Psoas muscle (tissue), 8 donors: ENCODE measurements at regions of chr9 and their contacts with region 1.

Region 1: DNA sequence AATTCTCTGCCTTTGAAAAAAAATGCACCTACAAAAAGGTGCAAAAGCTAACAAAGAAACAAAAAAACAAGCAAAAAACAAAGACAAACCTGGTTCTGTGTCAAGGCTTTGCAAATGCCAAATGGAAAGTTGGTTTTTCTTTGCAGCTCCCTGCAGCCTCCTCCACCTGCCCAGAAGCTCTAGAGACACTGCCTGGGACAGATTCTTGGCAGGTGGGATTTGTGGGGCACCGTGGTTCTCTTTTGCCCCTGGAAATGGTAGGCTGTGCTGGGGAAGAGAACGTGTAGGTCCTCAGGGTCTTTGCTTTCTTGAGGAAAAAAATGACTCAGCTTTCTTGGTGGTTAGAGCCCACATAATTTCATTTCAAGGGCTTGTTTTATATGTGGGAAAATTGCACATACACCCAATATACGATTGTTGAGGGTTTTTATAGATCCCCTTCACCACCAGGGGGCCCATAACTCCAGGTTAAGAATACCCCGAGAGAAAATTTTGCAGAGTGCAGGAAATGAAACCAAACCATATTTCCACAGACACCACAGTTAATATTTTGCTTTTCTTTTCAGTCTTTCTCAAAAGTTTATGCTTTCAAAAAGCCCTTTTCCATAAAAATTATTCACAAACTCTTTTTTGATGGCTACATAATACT is 58.7 kb downstream of the NXNL2 start:
- DNase-seq: no peak
- ATAC-seq: no peak
- H3K4me3 ChIP-seq: no peak overlapping the region
- H3K27ac ChIP-seq: no peak overlapping the region
- H3K4me1 ChIP-seq: no peaks in the 10 kb centered on the region
- H3K27me3 ChIP-seq: peaks cover 0 to 2% (median 0%) of the 10 kb centered on the region in 3 donors
- CTCF ChIP-seq: peak; percentile 57

Region 2: DNA sequence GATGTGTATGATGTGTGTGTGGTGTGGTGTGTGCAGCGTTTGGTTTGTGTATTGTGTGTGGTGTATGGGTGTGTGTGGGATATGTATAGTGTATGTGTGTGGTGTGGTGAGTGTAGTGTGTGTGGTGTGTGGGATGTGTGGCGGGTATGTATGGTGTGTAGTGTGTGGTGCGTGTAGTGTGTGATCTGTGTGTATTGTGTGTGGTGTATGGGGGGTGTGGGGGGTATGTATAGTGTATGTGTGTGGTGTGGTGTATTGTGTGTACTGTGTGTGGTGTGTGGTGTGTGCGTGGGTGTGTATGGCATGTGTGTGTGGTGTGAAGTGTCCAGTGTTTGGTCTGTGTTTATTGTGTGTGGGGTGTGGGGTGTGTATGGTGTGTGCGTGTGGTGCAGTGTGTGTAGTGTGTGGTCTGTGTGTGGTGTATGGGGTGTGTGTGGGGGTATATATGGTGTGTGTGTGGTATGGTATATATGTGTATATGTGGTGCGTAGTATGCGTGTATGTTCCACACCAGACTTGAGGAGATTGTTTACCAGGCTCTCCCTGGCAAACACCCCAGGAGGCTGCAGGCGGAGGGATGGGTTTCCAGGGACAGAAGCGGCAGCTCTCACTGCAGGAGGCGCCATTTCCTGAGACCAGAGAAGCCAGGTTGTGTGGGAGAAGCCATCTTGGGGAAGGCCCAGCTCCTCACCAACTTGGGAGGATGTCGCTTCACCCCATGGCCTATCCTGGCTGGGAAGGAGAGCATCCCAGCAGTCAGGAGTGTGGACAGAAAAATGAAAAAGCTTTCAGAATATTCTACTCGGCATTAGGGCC is 79.4 kb after region 1 on chr9:
- intact Hi-C with region 1: no loop called
- DNase-seq: no peak
- ATAC-seq: no peak
- H3K4me3 ChIP-seq: no peak overlapping the region
- H3K27ac ChIP-seq: no peak overlapping the region
- H3K4me1 ChIP-seq: no peaks in the 10 kb centered on the region
- H3K27me3 ChIP-seq: no peaks in the 10 kb centered on the region
- CTCF ChIP-seq: no peak

Region 3: GRCh38 chr9:89000973-89001916 is 407.6 kb after region 1 on chr9:
- intact Hi-C with region 1: loop called (anchors 2 to 5 kb)
- DNase-seq: peak; percentile 86 to 89
- ATAC-seq: peak; percentile 36 to 80 (median 64)
- H3K4me3 ChIP-seq: no peak overlapping the region
- H3K27ac ChIP-seq: no peak overlapping the region
- H3K4me1 ChIP-seq: no peaks in the 10 kb centered on the region
- H3K27me3 ChIP-seq: peaks cover 0 to 16% (median 0%) of the 10 kb centered on the region in 3 donors
- CTCF ChIP-seq: peak; percentile 61